Endothelial cell of umbilical vein (primary cell): ENCODE measurements at regions of chr2 and their contacts with region 1.

Region 1: DNA sequence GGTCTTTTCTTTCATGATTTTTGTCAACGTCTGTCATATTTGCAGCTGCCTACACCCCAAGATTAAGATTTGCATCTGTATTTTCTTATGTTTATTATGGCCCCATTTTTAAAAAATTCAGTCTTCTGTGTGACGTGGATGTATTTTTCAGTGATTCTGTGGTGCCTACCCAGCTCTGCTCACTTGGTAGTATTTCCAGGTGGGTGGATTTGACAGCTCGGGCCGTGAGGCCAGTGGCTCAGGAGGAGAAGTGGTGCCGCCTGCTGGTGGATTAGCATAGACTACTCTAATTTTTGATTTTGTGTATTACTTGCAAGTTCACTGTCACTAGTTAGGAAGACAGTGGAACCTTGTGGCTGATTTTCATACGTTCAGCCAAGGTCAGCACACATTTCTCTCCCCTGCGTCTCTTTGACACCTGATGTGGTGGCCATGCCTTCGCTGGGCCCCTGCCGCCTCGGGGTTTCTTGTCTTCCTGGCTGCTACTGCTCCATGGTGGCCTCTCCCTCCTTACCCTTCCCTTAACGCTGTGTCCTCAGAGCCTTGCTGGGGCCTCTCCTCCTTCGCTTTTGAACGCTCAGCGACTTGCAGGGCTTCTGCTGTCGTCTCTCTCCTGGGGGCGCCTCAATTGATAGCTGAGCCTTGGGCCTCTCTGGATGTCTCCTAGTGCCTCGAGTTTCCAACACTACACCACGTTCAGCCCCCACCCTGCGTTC is 89.3 kb downstream of the DGKD start:
- DNase-seq: peak; percentile 82
- H3K4me3 ChIP-seq: no peak overlapping the region
- H3K27ac ChIP-seq: no peak overlapping the region
- H3K4me1 ChIP-seq: no peaks in the 10 kb centered on the region
- H3K27me3 ChIP-seq: no peaks in the 10 kb centered on the region
- CTCF ChIP-seq: peak; percentile 75 to 86
- POLR2A ChIP-seq: no peak

Region 2: GRCh38 chr2:232854082-232854481 is 589.5 kb before region 1 on chr2:
- CTCF ChIA-PET with region 1: no interaction called
- POLR2A ChIA-PET with region 1: no interaction called
- dilution Hi-C with region 1: no loop called
- intact Hi-C with region 1: loop called (anchors 10 kb)
- DNase-seq: peak; percentile 68
- H3K4me3 ChIP-seq: no peak overlapping the region
- H3K27ac ChIP-seq: no peak overlapping the region
- H3K4me1 ChIP-seq: peaks cover 8% of the 10 kb centered on the region
- H3K27me3 ChIP-seq: no peaks in the 10 kb centered on the region
- CTCF ChIP-seq: no peak
- POLR2A ChIP-seq: no peak

Region 3: DNA sequence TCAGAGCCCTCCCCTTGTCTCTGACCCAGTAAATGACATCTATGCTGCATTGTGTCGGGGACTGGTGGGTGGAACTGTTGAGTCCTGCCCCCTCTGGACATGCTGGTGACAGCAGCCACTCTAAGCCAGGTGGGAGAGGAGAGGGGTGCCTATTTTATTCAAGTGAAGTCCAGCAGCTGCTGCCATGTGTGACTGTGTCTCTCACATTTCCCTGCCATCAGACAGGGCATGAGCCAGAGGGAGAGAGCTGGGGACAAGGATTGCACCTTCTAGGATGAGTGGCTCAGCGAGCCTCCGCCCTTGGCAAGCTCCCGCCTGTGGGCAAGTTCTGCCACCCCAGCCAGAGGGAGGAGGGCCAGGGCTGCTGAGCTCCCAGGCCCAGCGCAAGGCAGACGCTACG is 444.3 kb before region 1 on chr2:
- CTCF ChIA-PET with region 1: no interaction called
- POLR2A ChIA-PET with region 1: no interaction called
- dilution Hi-C with region 1: no loop called
- intact Hi-C with region 1: no loop called
- DNase-seq: no peak
- H3K4me3 ChIP-seq: no peak overlapping the region
- H3K27ac ChIP-seq: no peak overlapping the region
- H3K4me1 ChIP-seq: no peaks in the 10 kb centered on the region
- H3K27me3 ChIP-seq: no peaks in the 10 kb centered on the region
- CTCF ChIP-seq: no peak
- POLR2A ChIP-seq: no peak

Region 4: DNA sequence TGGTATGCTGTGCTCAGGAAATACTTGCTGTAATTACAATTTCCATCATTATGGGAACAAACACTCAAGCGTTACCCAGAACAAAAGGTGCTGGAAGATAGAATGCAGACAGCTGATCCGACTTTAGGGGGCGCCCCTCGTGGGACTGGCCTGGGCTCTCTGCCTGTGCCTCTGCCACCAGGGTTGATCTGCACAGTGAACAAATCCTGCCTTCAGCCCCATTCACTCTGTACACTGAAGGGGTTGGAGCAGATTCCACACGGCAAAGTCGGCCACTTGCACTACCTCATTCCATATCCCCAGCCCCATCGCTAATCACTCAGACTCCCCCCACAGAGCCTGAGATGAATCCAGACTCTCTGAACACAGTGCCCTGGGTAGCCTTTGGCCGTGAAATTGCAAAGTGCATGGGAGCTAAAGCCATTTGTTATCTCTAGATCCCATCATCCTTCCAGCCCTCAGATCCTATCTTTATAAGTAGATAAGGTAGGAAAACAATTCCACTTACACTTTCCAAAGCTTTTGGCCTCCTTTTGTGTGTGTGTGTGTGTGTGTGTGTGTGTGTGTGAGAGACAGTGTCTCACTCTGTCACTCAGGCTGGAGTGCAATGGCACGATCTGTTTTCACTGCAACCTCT is 314.2 kb before region 1 on chr2:
- CTCF ChIA-PET with region 1: no interaction called
- POLR2A ChIA-PET with region 1: no interaction called
- dilution Hi-C with region 1: no loop called
- intact Hi-C with region 1: no loop called
- DNase-seq: peak; percentile 32
- H3K4me3 ChIP-seq: no peak overlapping the region
- H3K27ac ChIP-seq: no peak overlapping the region
- H3K4me1 ChIP-seq: no peaks in the 10 kb centered on the region
- H3K27me3 ChIP-seq: no peaks in the 10 kb centered on the region
- CTCF ChIP-seq: peak; percentile 29 to 49
- POLR2A ChIP-seq: no peak

Region 5: GRCh38 chr2:233242231-233242927 is 201.2 kb before region 1 on chr2:
- CTCF ChIA-PET with region 1: no interaction called
- POLR2A ChIA-PET with region 1: no interaction called
- dilution Hi-C with region 1: no loop called
- intact Hi-C with region 1: no loop called
- DNase-seq: no peak
- H3K4me3 ChIP-seq: no peak overlapping the region
- H3K27ac ChIP-seq: no peak overlapping the region
- H3K4me1 ChIP-seq: peaks cover 7% of the 10 kb centered on the region
- H3K27me3 ChIP-seq: no peaks in the 10 kb centered on the region
- CTCF ChIP-seq: no peak
- POLR2A ChIP-seq: no peak

Region 6: DNA sequence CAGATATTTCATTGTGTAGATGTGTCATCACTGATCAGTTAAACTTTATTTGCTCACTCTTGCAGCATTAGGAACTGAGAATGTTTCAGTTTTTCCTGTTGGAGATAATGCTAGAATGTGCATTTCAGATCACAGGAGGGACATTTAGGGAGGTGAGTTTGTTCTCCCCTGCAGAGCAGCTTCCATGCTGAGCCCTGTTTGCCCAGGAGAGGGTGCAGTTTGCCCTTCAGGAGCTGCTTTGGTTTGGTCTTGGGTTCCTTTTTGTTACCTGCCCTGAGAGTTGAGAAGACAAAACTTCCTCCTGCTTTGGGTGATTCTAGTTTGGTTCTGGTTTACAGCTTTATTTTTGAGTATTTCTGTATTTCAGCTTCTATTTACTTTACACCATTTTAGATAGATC is 39.4 kb before region 1 on chr2:
- CTCF ChIA-PET with region 1: interaction called, 191 read pairs
- POLR2A ChIA-PET with region 1: no interaction called
- dilution Hi-C with region 1: no loop called
- intact Hi-C with region 1: loop called (anchors 1 kb)
- DNase-seq: peak; percentile 57
- H3K4me3 ChIP-seq: no peak overlapping the region
- H3K27ac ChIP-seq: no peak overlapping the region
- H3K4me1 ChIP-seq: peaks cover 4% of the 10 kb centered on the region
- H3K27me3 ChIP-seq: no peaks in the 10 kb centered on the region
- CTCF ChIP-seq: peak; percentile 75 to 80
- POLR2A ChIP-seq: no peak

Region 7: DNA sequence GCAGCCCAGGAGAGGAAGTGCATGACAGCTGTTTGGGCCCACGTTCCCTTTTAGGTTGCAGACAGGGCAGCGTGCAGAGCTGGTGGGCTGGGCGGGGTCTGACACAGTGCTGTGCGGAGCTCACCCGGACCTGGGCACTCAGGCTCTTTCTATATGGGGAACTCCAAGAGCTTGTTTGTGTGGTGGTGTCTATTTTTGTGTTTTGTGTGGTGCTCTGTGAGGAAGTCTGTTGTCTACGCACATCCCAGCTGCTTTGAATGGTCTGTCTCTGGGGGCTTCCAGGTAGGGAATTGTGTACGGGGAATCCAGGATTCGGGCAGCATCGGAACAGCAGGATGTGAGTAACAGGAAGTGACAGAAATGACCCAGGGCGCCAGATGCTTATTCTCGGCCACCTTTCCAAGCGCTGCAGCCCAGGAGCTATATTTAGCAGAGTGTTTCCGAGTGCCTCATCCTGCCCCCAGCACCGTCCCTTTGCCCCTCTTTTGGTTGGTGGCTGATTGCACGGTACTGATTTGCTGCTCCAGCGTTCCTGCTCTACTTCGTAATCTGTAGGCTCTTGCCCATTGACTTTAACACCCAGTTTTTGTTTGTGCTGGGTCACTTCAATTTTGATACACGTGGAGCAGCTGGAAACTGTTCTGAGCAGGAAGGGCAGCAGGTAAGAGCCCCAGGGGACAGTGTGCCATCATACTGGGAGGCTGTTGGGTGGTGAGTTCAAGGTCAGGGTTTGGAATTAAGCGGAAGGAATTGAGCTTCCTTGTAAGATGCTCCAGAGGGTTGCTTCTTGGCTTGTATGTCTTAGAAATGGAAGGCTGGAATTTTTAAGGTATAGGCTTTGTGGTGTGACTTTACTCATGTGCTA is 24.6 kb before region 1 on chr2:
- CTCF ChIA-PET with region 1: interaction called, 34 read pairs
- POLR2A ChIA-PET with region 1: no interaction called
- dilution Hi-C with region 1: no loop called
- intact Hi-C with region 1: loop called (anchors 1 kb)
- DNase-seq: peak; percentile 87
- H3K4me3 ChIP-seq: peak overlapping the region in 1 of 3 experiments; percentile 33
- H3K27ac ChIP-seq: peak overlapping the region; percentile 89
- H3K4me1 ChIP-seq: peaks cover 41% of the 10 kb centered on the region
- H3K27me3 ChIP-seq: no peaks in the 10 kb centered on the region
- CTCF ChIP-seq: no peak
- POLR2A ChIP-seq: no peak

Region 8: GRCh38 chr2:233711312-233712008 is 267.8 kb after region 1 on chr2:
- CTCF ChIA-PET with region 1: interaction called, 74 read pairs
- POLR2A ChIA-PET with region 1: no interaction called
- dilution Hi-C with region 1: no loop called
- intact Hi-C with region 1: no loop called
- DNase-seq: peak; percentile 66
- H3K4me3 ChIP-seq: no peak overlapping the region
- H3K27ac ChIP-seq: no peak overlapping the region
- H3K4me1 ChIP-seq: peaks cover 2% of the 10 kb centered on the region
- H3K27me3 ChIP-seq: peaks cover 0 to 2% of the 10 kb centered on the region in 2 experiments
- CTCF ChIP-seq: peak; percentile 89 to 90
- POLR2A ChIP-seq: no peak